ENCODE measurements at regions of chr19 and their contacts with region 1.

Region 1: GRCh38 chr19:47296036-47296435 is 13.6 kb upstream of the C5AR1 start:
- DNase-seq: peak in 1 of 2 donors; percentile 79
- ATAC-seq: peak; percentile 81
- H3K4me3 ChIP-seq: no peak overlapping the region
- H3K27ac ChIP-seq: no peak overlapping the region
- H3K4me1 ChIP-seq: no peaks in the 10 kb centered on the region
- H3K27me3 ChIP-seq: no peaks in the 10 kb centered on the region

Region 2: DNA sequence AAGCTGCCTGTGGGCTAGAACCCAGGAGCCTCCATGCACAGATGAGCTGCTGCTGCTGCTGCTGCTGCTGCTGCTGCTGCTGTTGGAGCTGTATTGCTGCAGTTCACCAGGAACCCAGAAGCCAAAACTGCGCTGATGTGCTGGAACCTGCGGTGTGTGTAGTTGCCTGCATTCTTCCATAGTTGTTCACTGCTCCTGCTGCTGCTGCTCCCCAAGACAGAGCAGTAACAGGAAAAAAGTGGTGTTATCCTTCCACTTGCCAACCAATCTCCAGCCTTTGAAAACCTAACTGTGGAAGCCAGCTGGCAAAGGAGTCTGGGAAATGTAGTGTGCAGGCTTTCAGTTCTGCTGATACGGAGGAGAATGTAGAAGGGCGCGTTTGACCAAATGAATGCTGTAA is 397.3 kb before region 1 on chr19:
- intact Hi-C with region 1: no loop called
- DNase-seq: peak in 1 of 2 donors; percentile 51
- ATAC-seq: peak; percentile 64
- H3K4me3 ChIP-seq: no peak overlapping the region
- H3K27ac ChIP-seq: peak overlapping the region in 1 of 2 donors; percentile 49
- H3K4me1 ChIP-seq: peaks cover 3 to 11% of the 10 kb centered on the region in 2 donors
- H3K27me3 ChIP-seq: no peaks in the 10 kb centered on the region

Region 3: DNA sequence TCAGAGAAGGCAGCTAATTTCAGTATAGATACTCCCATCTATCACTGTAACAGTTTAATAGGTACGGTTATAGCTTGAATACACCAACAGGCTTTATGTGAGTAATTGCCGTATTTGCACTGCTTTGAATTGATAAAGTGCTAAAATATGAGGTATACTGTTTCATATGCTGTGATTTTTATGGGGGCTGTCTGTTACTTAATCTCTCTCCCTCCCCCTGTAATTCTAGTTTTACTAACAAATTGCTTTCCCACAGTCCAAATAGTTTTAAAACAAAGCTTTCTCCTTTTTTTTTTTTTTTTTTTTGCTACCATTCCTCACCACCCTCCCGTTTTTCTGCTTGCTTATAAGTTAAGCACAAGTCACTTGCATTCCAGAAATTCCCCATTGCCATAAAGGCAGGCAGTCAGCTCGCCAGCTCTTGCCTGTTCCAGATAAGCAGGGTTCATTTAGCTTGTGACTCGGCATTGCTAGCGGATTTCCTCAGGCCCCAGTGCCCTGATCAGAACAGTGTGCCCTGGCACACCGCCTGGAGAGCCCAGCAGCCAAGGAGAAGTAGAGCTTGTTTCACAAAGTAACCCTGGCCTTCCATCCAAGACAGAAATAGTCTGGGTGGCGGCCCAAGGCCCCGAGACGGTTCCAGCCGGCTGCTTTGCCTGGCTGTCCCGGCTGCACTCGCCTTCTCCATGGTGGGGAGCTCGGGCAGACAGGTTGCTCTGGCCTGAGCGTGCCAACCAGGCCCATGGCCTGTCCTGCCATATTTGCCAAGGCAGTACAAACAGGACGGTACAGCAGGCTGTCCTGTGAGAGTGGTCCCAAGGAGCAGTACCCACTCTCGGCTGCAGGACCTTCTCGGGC is 319.9 kb before region 1 on chr19:
- intact Hi-C with region 1: no loop called
- DNase-seq: peak; percentile 98 to 99
- ATAC-seq: peak; percentile 93
- H3K4me3 ChIP-seq: no peak overlapping the region
- H3K27ac ChIP-seq: peak overlapping the region; percentile 64 to 90
- H3K4me1 ChIP-seq: peaks cover 9 to 14% of the 10 kb centered on the region in 2 donors
- H3K27me3 ChIP-seq: no peaks in the 10 kb centered on the region

Region 4: GRCh38 chr19:47152224-47153017 is 143.6 kb before region 1 on chr19:
- intact Hi-C with region 1: no loop called
- DNase-seq: no peak
- ATAC-seq: no peak
- H3K4me3 ChIP-seq: no peak overlapping the region
- H3K27ac ChIP-seq: no peak overlapping the region
- H3K4me1 ChIP-seq: no peaks in the 10 kb centered on the region
- H3K27me3 ChIP-seq: no peaks in the 10 kb centered on the region

Region 5: GRCh38 chr19:47348819-47349795 is 53.1 kb after region 1 on chr19 and contains the start of gene DHX34:
- intact Hi-C with region 1: loop called in 1 of 2 experiments (anchors 10 kb)
- DNase-seq: peak; percentile 99
- ATAC-seq: peak; percentile 100
- H3K4me3 ChIP-seq: peak within 1 kb of the TSS; percentile 59 to 70
- H3K27ac ChIP-seq: no peak within 1 kb of the TSS
- H3K4me1 ChIP-seq: no peaks in the 10 kb centered on the region
- H3K27me3 ChIP-seq: no peaks in the 10 kb centered on the region
- total RNA-seq, gene DHX34: 8.9 to 14.6 TPM

Region 6: DNA sequence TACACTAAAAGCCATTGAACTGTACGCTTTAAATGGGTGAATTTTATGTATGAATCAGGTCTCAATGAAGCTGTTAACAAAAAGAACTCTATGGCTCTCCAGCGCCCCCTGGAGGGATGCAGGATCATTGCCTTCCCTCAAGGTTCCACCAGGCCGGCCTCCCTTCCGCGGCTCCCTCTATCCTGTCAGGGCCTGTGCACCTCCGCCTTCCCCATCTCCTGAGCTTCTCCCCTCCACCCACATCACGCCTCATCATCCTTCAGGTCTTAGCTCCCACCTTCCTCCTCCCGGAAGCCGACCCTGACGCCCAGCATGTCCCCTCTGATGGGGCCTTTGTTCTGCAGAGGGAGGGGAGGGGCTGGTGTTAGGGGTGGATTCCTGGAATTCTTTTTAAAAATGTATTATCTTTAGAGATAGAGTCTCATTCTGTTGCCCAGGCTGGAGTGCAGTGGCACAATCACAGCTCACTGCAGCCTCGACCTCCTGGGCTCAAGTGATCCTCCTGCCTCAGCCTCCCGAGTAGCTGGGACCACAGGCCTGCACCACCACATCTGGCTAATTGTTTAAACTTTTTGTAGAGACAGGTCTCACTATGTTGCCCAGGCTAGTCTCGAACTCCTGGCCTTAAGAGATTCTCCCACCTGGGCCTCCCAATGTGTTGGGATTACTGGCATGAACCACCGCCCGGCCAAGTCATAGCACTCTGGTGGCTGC is 95.6 kb after region 1 on chr19:
- intact Hi-C with region 1: loop called (anchors 2 to 5 kb)
- DNase-seq: peak; percentile 87 to 95
- ATAC-seq: peak; percentile 76
- H3K4me3 ChIP-seq: no peak overlapping the region
- H3K27ac ChIP-seq: no peak overlapping the region
- H3K4me1 ChIP-seq: no peaks in the 10 kb centered on the region
- H3K27me3 ChIP-seq: no peaks in the 10 kb centered on the region

Region 7: DNA sequence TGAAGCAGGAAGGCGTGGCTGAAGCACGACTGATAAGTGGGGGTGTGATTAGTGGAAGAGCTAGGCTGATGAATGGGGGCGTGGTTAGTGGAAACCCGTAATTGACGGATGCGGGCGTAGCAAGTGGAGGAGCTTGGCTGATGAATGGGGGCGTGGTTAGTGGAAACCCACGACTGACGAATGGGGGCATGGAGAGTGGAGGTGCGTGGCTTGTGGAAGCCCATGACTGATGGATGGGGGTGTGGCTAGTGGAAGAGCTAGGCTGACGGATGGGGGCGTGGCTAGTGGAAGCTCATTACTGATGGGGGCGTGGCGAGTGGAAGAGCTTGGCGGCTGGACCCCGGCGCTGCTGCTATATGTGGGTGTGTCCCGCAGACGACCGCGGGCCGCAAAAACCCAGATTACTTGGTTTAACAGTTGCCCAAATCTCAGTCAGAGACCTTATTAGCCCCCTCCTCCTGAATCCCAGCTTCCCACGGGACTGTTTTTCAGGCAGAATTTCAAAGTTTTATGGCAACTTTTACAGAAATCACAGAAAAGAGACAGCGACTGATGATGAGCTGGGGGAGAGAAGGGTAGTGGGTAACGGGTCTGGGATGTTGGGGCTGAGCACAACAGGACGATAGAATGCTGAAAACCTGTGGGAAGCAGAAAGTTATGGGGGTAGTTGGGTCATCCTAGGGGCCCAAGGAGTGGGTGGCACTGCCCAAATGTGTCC is 132.3 kb after region 1 on chr19:
- intact Hi-C with region 1: loop called in 1 of 2 experiments (anchors 10 kb)
- DNase-seq: peak; percentile 87 to 90
- ATAC-seq: peak; percentile 83
- H3K4me3 ChIP-seq: no peak overlapping the region
- H3K27ac ChIP-seq: no peak overlapping the region
- H3K4me1 ChIP-seq: no peaks in the 10 kb centered on the region
- H3K27me3 ChIP-seq: no peaks in the 10 kb centered on the region